Heart left ventricle (tissue), 16 donors: ENCODE measurements at regions of chr20 and their contacts with region 1.

Region 1: DNA sequence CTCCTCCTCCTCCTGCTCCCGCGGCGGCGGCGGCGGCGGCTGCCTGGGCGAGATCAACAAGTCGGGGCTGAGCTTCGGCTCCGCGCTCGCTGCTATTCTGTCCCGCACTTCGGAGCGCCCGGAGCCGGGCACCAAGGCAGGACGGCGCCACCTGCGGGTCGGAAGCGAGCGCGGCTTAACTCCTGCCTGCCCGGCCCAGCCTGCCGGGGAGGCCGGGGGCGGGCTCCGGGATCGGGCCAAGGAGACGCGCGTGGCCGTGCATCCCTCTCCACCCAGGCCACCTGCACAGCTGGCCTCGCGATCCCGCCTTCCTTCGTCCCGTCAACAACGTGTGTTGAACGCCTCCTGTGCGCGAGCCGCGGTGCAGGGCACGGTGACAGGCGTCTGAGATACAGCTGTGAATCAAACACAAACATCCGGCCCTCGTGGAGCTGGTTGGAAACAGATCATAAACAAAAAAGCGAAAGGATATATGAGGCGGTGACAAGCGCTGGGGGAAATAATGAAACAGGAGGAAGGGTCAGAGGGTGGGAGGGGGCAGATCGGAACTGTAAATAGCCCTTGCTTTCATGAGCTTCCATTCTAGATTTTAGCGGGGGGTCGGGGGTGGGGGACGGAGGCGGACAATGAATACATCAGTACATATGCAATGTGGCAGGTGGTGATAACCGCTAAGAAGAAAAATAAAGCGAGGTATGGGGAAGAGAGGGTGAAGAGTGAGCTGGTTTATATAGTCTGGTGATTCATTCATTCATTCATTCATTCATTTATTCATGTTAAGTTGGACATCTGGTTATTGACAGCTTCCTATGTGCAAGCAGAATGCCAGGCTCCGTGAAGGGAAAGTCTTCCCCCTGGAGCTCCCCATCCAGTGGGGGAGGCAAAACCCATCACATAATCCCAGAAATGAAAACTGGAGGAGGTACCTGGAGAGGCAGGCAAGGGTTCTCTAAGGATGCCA is 2.0 kb upstream of the KCNB1 start:
- DNase-seq: peak; percentile 75 to 89 (median 77)
- ATAC-seq: peak; percentile 73 to 92 (median 90)
- H3K4me3 ChIP-seq: peak overlapping the region in 11 of 12 donors; percentile 31 to 64 (median 48)
- H3K27ac ChIP-seq: peak overlapping the region in 1 of 12 donors; percentile 57
- H3K4me1 ChIP-seq: peaks cover 0 to 27% (median 13%) of the 10 kb centered on the region in 12 donors
- H3K27me3 ChIP-seq: peaks cover 0 to 43% (median 20%) of the 10 kb centered on the region in 9 donors
- CTCF ChIP-seq: peak; percentile 63 to 88 (median 80)
- POLR2A ChIP-seq: no peak

Region 2: DNA sequence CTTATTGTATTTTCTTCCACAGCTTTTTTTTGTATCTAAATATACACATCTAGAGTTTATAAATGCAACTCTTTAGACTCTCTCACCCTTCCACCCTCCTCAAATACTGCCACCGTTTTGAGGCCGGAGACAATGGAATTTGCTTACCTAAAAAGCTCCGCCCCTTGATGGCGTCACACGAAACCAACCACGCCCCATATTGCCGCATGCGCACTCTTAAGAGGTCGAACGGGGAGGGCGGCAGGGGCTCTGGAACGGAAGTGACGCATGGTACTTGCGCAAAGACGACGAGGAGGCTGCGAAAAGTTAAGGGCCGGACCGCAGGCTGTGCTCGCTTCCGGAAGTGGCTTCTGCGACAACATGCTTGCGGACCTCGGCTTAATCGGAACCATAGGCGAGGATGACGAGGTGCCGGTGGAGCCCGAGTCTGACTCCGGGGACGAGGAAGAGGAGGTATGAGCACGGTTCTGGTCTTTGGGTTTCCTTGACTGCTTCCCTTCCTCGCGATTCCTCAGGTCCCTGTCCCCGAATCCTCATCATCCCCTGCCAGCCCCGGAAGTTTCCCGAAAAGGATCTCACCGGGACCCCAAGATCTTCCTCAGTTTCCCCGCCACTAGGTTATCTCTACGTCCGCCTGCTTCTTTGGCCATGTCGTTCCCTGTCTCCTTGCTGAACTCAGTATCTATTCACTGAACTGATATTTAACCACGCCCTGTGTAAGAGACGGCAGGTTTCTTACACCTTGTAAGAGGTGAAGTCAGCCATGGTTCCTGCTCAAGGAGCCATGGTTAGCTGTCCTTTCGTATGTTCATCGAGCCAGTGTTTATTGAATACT is 265.2 kb before region 1 on chr20 and contains the start of gene DDX27:
- intact Hi-C with region 1: no loop called
- DNase-seq: peak; percentile 97 to 98 (median 97)
- ATAC-seq: peak; percentile 94 to 99 (median 98)
- H3K4me3 ChIP-seq: peak within 1 kb of the TSS; percentile 52 to 92 (median 82)
- H3K27ac ChIP-seq: peak within 1 kb of the TSS; percentile 74 to 98 (median 90)
- H3K4me1 ChIP-seq: peaks cover 0 to 29% (median 14%) of the 10 kb centered on the region in 12 donors
- H3K27me3 ChIP-seq: no peaks in the 10 kb centered on the region
- CTCF ChIP-seq: no peak
- POLR2A ChIP-seq: peak in 1 of 2 donors; percentile 74
- total RNA-seq, gene DDX27: 12.0 to 18.3 (median 13.4) TPM

Region 3: GRCh38 chr20:49330544-49331239 is 153.8 kb before region 1 on chr20:
- intact Hi-C with region 1: loop called (anchors 1 to 5 kb)
- DNase-seq: no peak
- ATAC-seq: no peak
- H3K4me3 ChIP-seq: no peak overlapping the region
- H3K27ac ChIP-seq: no peak overlapping the region
- H3K4me1 ChIP-seq: no peaks in the 10 kb centered on the region
- H3K27me3 ChIP-seq: peaks cover 0 to 28% (median 7%) of the 10 kb centered on the region in 9 donors
- CTCF ChIP-seq: no peak
- POLR2A ChIP-seq: no peak

Region 4: DNA sequence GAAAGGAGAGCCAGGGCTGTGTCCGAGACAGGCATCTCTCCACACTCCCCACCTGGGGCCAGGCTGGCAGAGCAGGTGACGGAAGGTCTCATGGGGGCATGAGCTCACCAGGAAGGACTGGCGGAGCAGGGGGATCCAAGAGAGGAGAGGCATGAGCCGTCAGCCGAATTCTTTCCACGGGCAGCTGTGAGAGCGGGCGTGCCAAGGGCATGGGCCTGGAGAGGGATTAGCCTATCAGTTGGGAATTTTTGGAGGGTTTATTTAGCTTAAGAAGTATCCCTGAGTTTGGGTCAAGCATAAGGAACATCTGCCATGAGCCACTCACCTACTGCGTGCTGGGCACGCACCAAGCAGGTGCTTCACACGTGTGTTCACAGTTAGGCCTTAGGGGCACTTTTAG is 146.4 kb before region 1 on chr20:
- intact Hi-C with region 1: loop called (anchors 1 to 5 kb)
- DNase-seq: no peak
- ATAC-seq: no peak
- H3K4me3 ChIP-seq: no peak overlapping the region
- H3K27ac ChIP-seq: no peak overlapping the region
- H3K4me1 ChIP-seq: no peaks in the 10 kb centered on the region
- H3K27me3 ChIP-seq: peaks cover 0 to 7% (median 0%) of the 10 kb centered on the region in 9 donors
- CTCF ChIP-seq: no peak
- POLR2A ChIP-seq: no peak

Region 5: DNA sequence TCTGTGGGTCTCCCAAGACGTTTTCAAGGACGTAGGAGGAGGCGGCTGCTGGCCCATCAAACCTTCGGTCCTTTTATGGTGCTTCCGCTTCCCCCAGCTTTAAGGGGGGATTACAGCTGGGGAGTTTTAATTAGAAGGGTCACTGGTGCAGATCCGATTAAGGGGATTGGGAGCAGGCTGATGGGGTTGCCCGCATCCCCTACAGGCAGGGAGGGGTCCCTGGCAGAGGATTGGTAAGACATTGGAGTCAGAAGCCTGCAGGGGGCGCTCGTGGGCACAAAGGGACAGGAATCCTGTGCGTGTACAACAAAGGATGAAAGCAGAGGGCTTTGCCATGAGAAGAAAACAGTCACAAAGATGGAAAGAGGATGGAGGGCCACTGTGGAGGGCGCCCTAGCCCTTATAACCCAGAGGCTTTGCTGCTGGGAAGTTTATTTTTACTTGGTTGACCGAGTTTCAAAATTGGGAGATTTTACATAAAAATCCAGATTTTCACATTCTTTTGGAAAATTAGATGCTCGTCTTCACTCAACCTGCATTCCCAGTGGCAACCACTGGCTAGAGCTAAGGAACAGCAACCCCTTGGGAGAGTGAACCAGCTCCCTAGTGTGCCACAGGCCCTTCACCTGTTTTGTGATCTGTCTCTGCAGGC is 99.9 kb before region 1 on chr20:
- intact Hi-C with region 1: loop called (anchors 1 to 5 kb)
- DNase-seq: peak; percentile 60 to 88 (median 71)
- ATAC-seq: peak in 2 of 4 donors; percentile 42 to 46
- H3K4me3 ChIP-seq: no peak overlapping the region
- H3K27ac ChIP-seq: peak overlapping the region in 1 of 12 donors; percentile 20
- H3K4me1 ChIP-seq: peaks cover 0 to 32% (median 17%) of the 10 kb centered on the region in 12 donors
- H3K27me3 ChIP-seq: no peaks in the 10 kb centered on the region
- CTCF ChIP-seq: peak; percentile 49 to 80 (median 74)
- POLR2A ChIP-seq: no peak

Region 6: GRCh38 chr20:49534255-49534712 is 49.8 kb after region 1 on chr20:
- intact Hi-C with region 1: loop called in 1 of 10 experiments (anchors 5 kb)
- DNase-seq: peak in 1 of 5 donors; percentile 39
- ATAC-seq: peak in 3 of 4 donors; percentile 70 to 81 (median 71)
- H3K4me3 ChIP-seq: no peak overlapping the region
- H3K27ac ChIP-seq: no peak overlapping the region
- H3K4me1 ChIP-seq: peaks cover 0 to 7% (median 0%) of the 10 kb centered on the region in 12 donors
- H3K27me3 ChIP-seq: no peaks in the 10 kb centered on the region
- CTCF ChIP-seq: peak; percentile 67 to 87 (median 80)
- POLR2A ChIP-seq: no peak